Aorta (tissue), 5 donors: ENCODE measurements at regions of chr6 and their contacts with region 1.

Region 1: DNA sequence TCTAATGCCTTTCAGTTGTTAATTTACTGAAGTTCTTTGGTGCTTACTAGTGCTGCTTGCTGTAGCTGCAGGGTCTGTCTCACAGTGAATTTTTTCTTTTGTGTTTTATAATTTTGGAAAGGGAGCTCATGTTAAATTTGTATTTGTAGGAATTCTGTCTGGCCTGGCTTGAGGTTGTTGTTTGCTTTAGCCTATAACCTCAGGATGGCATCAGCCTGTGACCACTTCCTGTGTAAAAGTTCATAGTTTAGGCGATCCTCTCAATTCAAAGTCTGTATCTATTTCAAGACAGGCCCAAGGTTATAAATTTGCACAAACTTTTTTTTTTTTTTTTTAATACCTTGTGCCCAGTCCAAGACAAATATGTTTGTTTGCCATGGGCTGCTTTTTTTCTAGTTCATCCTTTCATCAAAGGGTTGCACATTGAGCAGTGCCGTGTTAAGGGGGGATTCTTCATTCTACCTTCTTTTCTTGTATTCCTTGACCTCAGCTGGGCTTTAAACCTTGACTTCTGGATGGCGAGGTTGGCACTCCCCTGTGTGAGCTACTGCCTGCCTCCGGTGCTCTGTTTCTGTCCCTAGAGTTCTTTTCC is 7.3 kb downstream of the RIPK1 start:
- DNase-seq: no peak
- ATAC-seq: no peak
- H3K4me3 ChIP-seq: no peak overlapping the region
- H3K27ac ChIP-seq: no peak overlapping the region
- H3K4me1 ChIP-seq: no peaks in the 10 kb centered on the region
- H3K27me3 ChIP-seq: no peaks in the 10 kb centered on the region

Region 2: GRCh38 chr6:2959909-2960719 is 115.5 kb before region 1 on chr6:
- intact Hi-C with region 1: no loop called
- DNase-seq: no peak
- ATAC-seq: no peak
- H3K4me3 ChIP-seq: no peak overlapping the region
- H3K27ac ChIP-seq: peak overlapping the region in 1 of 2 donors; percentile 23
- H3K4me1 ChIP-seq: no peaks in the 10 kb centered on the region
- H3K27me3 ChIP-seq: no peaks in the 10 kb centered on the region

Region 3: GRCh38 chr6:3109761-3110160 is 34.1 kb after region 1 on chr6:
- intact Hi-C with region 1: loop called in 1 of 2 experiments (anchors 5 kb)
- DNase-seq: no peak
- ATAC-seq: no peak
- H3K4me3 ChIP-seq: no peak overlapping the region
- H3K27ac ChIP-seq: no peak overlapping the region
- H3K4me1 ChIP-seq: no peaks in the 10 kb centered on the region
- H3K27me3 ChIP-seq: no peaks in the 10 kb centered on the region

Region 4: GRCh38 chr6:3231247-3232016 is 155.8 kb after region 1 on chr6:
- intact Hi-C with region 1: no loop called
- DNase-seq: peak in 1 of 2 donors; percentile 75
- ATAC-seq: peak; percentile 79
- H3K4me3 ChIP-seq: peak overlapping the region; percentile 9 to 29
- H3K27ac ChIP-seq: no peak overlapping the region
- H3K4me1 ChIP-seq: no peaks in the 10 kb centered on the region
- H3K27me3 ChIP-seq: peaks cover 0 to 2% of the 10 kb centered on the region in 2 donors